Heart left ventricle (tissue), 16 donors: ENCODE measurements at regions of chr9 and their contacts with region 1.

Region 1: GRCh38 chr9:73577848-73578247 is 426.2 kb downstream of the ANXA1 start:
- DNase-seq: peak in 1 of 5 donors; percentile 13
- ATAC-seq: no peak
- H3K4me3 ChIP-seq: no peak overlapping the region
- H3K27ac ChIP-seq: no peak overlapping the region
- H3K4me1 ChIP-seq: no peaks in the 10 kb centered on the region
- H3K27me3 ChIP-seq: no peaks in the 10 kb centered on the region
- CTCF ChIP-seq: no peak
- POLR2A ChIP-seq: no peak

Region 2: GRCh38 chr9:73497796-73498195 is 80.1 kb before region 1 on chr9:
- intact Hi-C with region 1: loop called in 1 of 10 experiments (anchors 10 kb)
- DNase-seq: peak in 2 of 5 donors; percentile 6 to 26
- ATAC-seq: peak; percentile 56 to 94 (median 74)
- H3K4me3 ChIP-seq: no peak overlapping the region
- H3K27ac ChIP-seq: peak overlapping the region in 7 of 12 donors; percentile 3 to 57 (median 31)
- H3K4me1 ChIP-seq: peaks cover 0 to 22% (median 2%) of the 10 kb centered on the region in 12 donors
- H3K27me3 ChIP-seq: no peaks in the 10 kb centered on the region
- CTCF ChIP-seq: no peak
- POLR2A ChIP-seq: no peak

Region 3: GRCh38 chr9:73515216-73515615 is 62.6 kb before region 1 on chr9:
- intact Hi-C with region 1: loop called in 2 of 10 experiments (anchors 10 kb)
- DNase-seq: no peak
- ATAC-seq: no peak
- H3K4me3 ChIP-seq: no peak overlapping the region
- H3K27ac ChIP-seq: no peak overlapping the region
- H3K4me1 ChIP-seq: peaks cover 0 to 2% (median 0%) of the 10 kb centered on the region in 12 donors
- H3K27me3 ChIP-seq: no peaks in the 10 kb centered on the region
- CTCF ChIP-seq: no peak
- POLR2A ChIP-seq: no peak